ENCODE measurements at regions of chr4 and their contacts with region 1.

Region 1: GRCh38 chr4:109729718-109730618 is at the start of gene PLA2G12A:
- DNase-seq: peak; percentile 84
- ATAC-seq: peak; percentile 98
- total RNA-seq, gene PLA2G12A: 73.7 TPM

Region 2: GRCh38 chr4:109815151-109816081 is 85.4 kb after region 1 on chr4 and contains the start of gene GAR1:
- intact Hi-C with region 1: loop called (anchors 10 kb)
- DNase-seq: peak; percentile 90
- ATAC-seq: peak; percentile 100
- total RNA-seq, gene GAR1: 9.2 TPM

Measured in left ventricle myocardium superior (tissue), 1 donor.